IMR-90 (cell line): ENCODE measurements at regions of chr6 and their contacts with region 1.

Region 1: GRCh38 chr6:10962673-10963072 is 75.8 kb downstream of the SYCP2L start:
- DNase-seq: peak; percentile 95
- ATAC-seq: peak; percentile 93
- H3K4me3 ChIP-seq: no peak overlapping the region
- H3K27ac ChIP-seq: no peak overlapping the region; the same call in 1 of the 2 replicates
- H3K4me1 ChIP-seq: peaks cover 6% of the 10 kb centered on the region
- H3K27me3 ChIP-seq: no peaks in the 10 kb centered on the region
- CTCF ChIP-seq: no peak
- POLR2A ChIP-seq: no peak
- RAD21 ChIP-seq: no peak

Region 2: GRCh38 chr6:10999994-11000393 is 37.3 kb after region 1 on chr6:
- CTCF ChIA-PET with region 1: no interaction called
- POLR2A ChIA-PET with region 1: interaction called, 3 read pairs
- dilution Hi-C with region 1: no loop called
- in situ Hi-C with region 1: no loop called
- intact Hi-C with region 1: loop called (anchors 5 kb)
- DNase-seq: peak; percentile 90
- ATAC-seq: peak; percentile 92
- H3K4me3 ChIP-seq: no peak overlapping the region
- H3K27ac ChIP-seq: no peak overlapping the region
- H3K4me1 ChIP-seq: no peaks in the 10 kb centered on the region; the same call in 1 of the 2 replicates
- H3K27me3 ChIP-seq: no peaks in the 10 kb centered on the region
- CTCF ChIP-seq: no peak
- POLR2A ChIP-seq: no peak
- RAD21 ChIP-seq: no peak

Region 3: GRCh38 chr6:11033825-11034224 is 71.2 kb after region 1 on chr6:
- CTCF ChIA-PET with region 1: no interaction called
- POLR2A ChIA-PET with region 1: interaction called, 11 read pairs
- dilution Hi-C with region 1: no loop called
- in situ Hi-C with region 1: no loop called
- intact Hi-C with region 1: loop called (anchors 2 kb)
- DNase-seq: peak; percentile 90
- ATAC-seq: peak; percentile 92
- H3K4me3 ChIP-seq: no peak overlapping the region
- H3K27ac ChIP-seq: no peak overlapping the region
- H3K4me1 ChIP-seq: peaks cover 6% of the 10 kb centered on the region
- H3K27me3 ChIP-seq: no peaks in the 10 kb centered on the region
- CTCF ChIP-seq: no peak
- POLR2A ChIP-seq: no peak
- RAD21 ChIP-seq: no peak